Activated CD8-positive, alpha-beta memory T cell treated with anti-CD3 and anti-CD28 coated beads, Interleukin-2, amount 10 ng/mL, durations not matched to agents 7 days and 5 days (primary cell): ENCODE measurements at regions of chr19 and their contacts with region 1.

Region 1: GRCh38 chr19:10251792-10252694 is at the start of gene MRPL4:
- DNase-seq: peak; percentile 99
- ATAC-seq: peak; percentile 98
- H3K4me3 Mint-ChIP-seq: peak within 1 kb of the TSS; percentile 99
- H3K27ac Mint-ChIP-seq: peak within 1 kb of the TSS; percentile 96
- H3K4me1 Mint-ChIP-seq: peaks cover 37% of the 10 kb centered on the region
- H3K27me3 Mint-ChIP-seq: no peaks in the 10 kb centered on the region
- total RNA-seq, gene MRPL4: 85.4 to 112 TPM

Region 2: GRCh38 chr19:10085641-10086590 is 166.1 kb before region 1 on chr19 and contains the start of gene SHFL:
- CTCF ChIA-PET with region 1: no interaction called
- DNase-seq: peak; percentile 92
- ATAC-seq: peak; percentile 98
- H3K4me3 Mint-ChIP-seq: peak within 1 kb of the TSS; percentile 79
- H3K27ac Mint-ChIP-seq: peak within 1 kb of the TSS; percentile 84
- H3K4me1 Mint-ChIP-seq: peaks cover 30% of the 10 kb centered on the region
- H3K27me3 Mint-ChIP-seq: no peaks in the 10 kb centered on the region
- total RNA-seq, gene SHFL: 95.3 to 146 TPM

Region 3: GRCh38 chr19:10142701-10143375 is 109.2 kb before region 1 on chr19:
- CTCF ChIA-PET with region 1: interaction called, 11 read pairs
- DNase-seq: no peak
- ATAC-seq: peak; percentile 66
- H3K4me3 Mint-ChIP-seq: no peak overlapping the region
- H3K27ac Mint-ChIP-seq: peak overlapping the region; percentile 86
- H3K4me1 Mint-ChIP-seq: peaks cover 29% of the 10 kb centered on the region
- H3K27me3 Mint-ChIP-seq: no peaks in the 10 kb centered on the region

Region 4: DNA sequence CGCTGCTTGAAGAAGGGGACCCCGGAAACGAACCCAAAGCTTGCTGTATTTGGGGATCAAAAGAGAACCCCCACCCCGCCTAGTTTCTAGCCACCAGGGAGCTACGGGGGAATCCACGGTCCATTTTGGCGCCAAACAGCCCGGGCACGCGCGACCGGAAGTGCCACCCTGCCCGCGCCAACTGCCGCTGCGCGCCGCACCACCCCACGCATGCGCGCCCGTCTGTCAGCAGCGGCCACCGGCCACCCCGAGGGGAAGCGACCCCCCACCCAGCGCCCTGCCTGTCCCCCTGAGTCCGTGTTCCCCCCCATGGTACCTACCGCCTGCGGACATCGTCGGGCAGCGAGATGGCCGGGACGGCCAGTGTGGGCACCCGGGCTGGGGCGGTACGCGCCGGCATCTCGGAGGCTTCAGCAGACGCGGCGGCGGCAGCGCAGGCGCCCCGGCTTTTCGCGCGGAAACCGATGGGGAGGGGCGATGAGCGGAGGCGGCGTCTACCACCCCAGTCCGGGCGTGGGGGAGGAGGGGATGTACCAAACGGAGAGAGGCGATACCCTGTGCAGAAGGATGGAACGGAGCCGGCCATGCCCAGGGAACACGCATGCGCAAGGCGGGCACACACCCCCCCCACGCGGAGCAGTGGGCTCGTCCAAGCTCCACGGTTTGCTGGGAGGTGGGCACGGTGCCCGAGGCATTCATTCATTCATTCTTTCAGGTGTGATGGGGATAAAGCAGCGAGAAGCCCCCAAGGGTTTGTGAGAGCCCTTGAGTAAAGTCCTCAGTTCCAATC is 57.3 kb before region 1 on chr19 and contains the start of gene DNMT1:
- CTCF ChIA-PET with region 1: interaction called, 19 read pairs
- DNase-seq: peak; percentile 99
- ATAC-seq: peak; percentile 96
- H3K4me3 Mint-ChIP-seq: peak within 1 kb of the TSS; percentile 92
- H3K27ac Mint-ChIP-seq: peak within 1 kb of the TSS; percentile 94
- H3K4me1 Mint-ChIP-seq: peaks cover 51% of the 10 kb centered on the region
- H3K27me3 Mint-ChIP-seq: no peaks in the 10 kb centered on the region
- total RNA-seq, gene DNMT1: 433 to 500 TPM

Region 5: DNA sequence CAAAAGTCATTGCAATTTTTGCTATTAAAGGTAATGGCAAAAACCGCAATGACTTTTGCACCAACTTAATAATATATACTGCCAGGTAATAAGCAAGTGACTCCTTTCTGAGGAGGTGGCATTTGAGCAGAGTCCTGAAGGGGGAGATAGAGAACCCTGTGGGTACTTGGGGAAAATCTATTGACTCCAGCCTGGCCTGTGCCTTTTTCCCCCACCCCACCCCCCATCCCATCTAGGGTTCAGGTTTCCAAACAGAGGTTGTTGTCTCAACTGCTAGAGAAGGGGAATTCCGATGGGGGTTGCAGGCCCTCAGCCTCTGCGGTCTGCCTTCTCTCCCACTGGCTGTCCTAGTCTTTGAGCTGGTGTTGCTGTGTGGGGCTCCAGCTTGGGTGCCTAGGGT is 32.4 kb before region 1 on chr19:
- CTCF ChIA-PET with region 1: interaction called, 12 read pairs
- DNase-seq: peak; percentile 52
- ATAC-seq: peak; percentile 70
- H3K4me3 Mint-ChIP-seq: no peak overlapping the region
- H3K27ac Mint-ChIP-seq: no peak overlapping the region
- H3K4me1 Mint-ChIP-seq: peaks cover 4% of the 10 kb centered on the region
- H3K27me3 Mint-ChIP-seq: no peaks in the 10 kb centered on the region

Region 6: DNA sequence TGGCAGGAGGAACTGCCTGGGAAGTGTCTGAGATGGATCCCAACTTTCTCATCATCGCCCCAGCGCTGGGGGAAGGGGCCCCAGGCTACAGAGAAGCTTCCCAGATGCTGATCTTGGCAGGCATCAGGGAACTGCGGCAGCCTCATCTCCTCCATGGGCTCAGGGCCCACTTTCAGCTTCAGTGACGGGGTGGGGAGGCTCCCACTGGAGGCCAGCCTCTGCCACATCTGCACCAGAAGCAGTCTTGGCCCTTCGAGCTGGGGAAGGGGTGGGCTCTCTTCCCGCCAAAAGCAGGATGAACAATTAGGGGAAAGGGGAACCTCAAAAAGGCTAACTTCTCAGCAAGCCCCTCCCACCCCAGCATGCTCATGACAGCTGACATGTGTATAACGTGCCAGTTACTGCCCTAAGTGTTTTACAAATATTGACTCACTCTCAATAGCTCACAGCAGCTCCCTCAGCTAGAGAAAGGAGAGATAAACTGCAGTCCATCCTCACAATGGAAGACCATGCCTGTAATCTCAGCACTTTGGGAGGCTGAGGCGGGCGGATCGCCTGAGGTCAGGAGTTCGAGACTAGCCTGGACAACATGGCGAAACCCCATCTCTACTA is 13.8 kb before region 1 on chr19:
- CTCF ChIA-PET with region 1: interaction called, 55 read pairs
- DNase-seq: no peak
- ATAC-seq: no peak
- H3K4me3 Mint-ChIP-seq: no peak overlapping the region
- H3K27ac Mint-ChIP-seq: no peak overlapping the region
- H3K4me1 Mint-ChIP-seq: peaks cover 26% of the 10 kb centered on the region
- H3K27me3 Mint-ChIP-seq: no peaks in the 10 kb centered on the region

Region 7: DNA sequence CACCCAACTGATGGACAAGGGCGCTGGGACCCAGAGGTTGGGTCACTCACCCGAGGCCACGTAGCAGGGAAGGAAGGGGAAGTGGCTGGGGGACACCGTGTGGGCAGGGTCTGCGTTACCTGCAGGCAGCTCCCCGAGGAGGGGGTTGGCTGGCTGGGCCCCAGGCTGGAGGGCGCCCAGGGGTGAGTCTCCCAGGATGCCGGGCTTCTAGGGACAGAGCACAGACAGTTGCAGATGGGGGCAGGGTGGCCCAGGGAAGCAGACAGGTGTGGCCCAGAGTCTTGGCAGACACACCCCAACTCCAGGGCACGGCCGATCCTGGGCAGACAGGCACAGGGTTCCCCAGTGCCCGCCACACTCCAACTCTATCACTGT is 69.4 kb after region 1 on chr19:
- CTCF ChIA-PET with region 1: no interaction called
- DNase-seq: no peak
- ATAC-seq: no peak
- H3K4me3 Mint-ChIP-seq: no peak overlapping the region
- H3K27ac Mint-ChIP-seq: no peak overlapping the region
- H3K4me1 Mint-ChIP-seq: peaks cover under 1% of the 10 kb centered on the region
- H3K27me3 Mint-ChIP-seq: no peaks in the 10 kb centered on the region